A673 (cell line): ENCODE measurements at regions of chr12 and their contacts with region 1.

Region 1: GRCh38 chr12:20120328-20120695 is 248.0 kb upstream of the PDE3A start:
- DNase-seq: peak; percentile 16
- H3K4me3 ChIP-seq: no peak overlapping the region
- H3K27ac ChIP-seq: no peak overlapping the region
- H3K4me1 ChIP-seq: peaks cover 28% of the 10 kb centered on the region
- H3K27me3 ChIP-seq: no peaks in the 10 kb centered on the region
- CTCF ChIP-seq: no peak

Region 2: DNA sequence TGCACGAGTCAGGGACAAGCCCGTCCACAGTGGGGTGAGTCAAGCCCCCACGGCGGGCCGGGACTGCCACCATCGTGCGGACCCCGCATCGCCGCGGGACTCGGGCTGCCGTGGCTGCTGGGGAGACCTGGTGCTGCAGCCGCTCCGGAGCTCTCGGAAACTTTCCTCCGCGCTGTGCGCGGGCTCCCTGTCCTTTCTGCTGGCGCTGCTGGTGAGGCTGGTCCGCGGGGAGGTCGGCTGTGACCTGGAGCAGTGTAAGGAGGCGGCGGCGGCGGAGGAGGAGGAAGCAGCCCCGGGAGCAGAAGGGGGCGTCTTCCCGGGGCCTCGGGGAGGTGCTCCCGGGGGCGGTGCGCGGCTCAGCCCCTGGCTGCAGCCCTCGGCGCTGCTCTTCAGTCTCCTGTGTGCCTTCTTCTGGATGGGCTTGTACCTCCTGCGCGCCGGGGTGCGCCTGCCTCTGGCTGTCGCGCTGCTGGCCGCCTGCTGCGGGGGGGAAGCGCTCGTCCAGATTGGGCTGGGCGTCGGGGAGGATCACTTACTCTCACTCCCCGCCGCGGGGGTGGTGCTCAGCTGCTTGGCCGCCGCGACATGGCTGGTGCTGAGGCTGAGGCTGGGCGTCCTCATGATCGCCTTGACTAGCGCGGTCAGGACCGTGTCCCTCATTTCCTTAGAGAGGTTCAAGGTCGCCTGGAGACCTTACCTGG is 249.1 kb after region 1 on chr12:
- CTCF ChIA-PET with region 1: no interaction called
- POLR2A ChIA-PET with region 1: no interaction called
- intact Hi-C with region 1: loop called (anchors 1 kb)
- DNase-seq: peak; percentile 49
- H3K4me3 ChIP-seq: peak overlapping the region; percentile 55
- H3K27ac ChIP-seq: no peak overlapping the region
- H3K4me1 ChIP-seq: peaks cover 4% of the 10 kb centered on the region
- H3K27me3 ChIP-seq: peaks cover 60% of the 10 kb centered on the region
- CTCF ChIP-seq: no peak

Region 3: GRCh38 chr12:20426191-20426590 is 305.9 kb after region 1 on chr12:
- CTCF ChIA-PET with region 1: no interaction called
- POLR2A ChIA-PET with region 1: no interaction called
- intact Hi-C with region 1: no loop called
- DNase-seq: no peak
- H3K4me3 ChIP-seq: no peak overlapping the region
- H3K27ac ChIP-seq: no peak overlapping the region
- H3K4me1 ChIP-seq: no peaks in the 10 kb centered on the region
- H3K27me3 ChIP-seq: peaks cover 13% of the 10 kb centered on the region
- CTCF ChIP-seq: no peak

Region 4: DNA sequence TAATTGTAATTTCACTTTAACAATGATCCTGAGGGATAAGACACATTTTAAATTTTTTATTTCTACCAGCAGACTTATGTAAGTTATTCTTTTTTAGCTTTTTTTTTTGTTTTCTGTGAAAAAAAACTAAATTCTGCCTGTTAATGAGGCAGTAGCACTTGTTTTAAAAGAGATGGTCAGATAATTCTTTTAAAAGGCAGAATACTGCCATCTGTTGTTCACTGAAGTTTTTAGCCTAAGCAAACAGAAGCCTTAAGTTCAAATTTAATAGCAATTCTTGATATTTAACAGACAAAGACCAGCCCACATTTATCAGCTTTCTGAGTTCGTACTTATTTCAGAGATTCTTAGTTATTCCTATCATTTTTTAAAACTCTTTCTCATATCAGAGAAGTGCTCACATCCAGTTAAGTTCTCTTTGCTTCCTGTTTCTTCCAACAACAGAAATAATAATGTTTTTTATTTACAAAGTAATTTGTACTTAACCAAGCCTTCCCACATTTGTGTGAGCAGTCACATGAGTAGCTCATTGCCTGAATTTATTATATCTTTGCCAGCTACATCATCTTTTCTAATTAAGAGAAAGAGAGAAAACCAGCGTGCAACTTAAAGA is 481.5 kb after region 1 on chr12:
- CTCF ChIA-PET with region 1: no interaction called
- POLR2A ChIA-PET with region 1: no interaction called
- intact Hi-C with region 1: loop called (anchors 5 kb)
- DNase-seq: peak; percentile 42
- H3K4me3 ChIP-seq: no peak overlapping the region
- H3K27ac ChIP-seq: no peak overlapping the region
- H3K4me1 ChIP-seq: no peaks in the 10 kb centered on the region
- H3K27me3 ChIP-seq: peaks cover 6% of the 10 kb centered on the region
- CTCF ChIP-seq: peak; percentile 63